A549 (cell line): ENCODE measurements at regions of chr2 and their contacts with region 1.

Region 1: DNA sequence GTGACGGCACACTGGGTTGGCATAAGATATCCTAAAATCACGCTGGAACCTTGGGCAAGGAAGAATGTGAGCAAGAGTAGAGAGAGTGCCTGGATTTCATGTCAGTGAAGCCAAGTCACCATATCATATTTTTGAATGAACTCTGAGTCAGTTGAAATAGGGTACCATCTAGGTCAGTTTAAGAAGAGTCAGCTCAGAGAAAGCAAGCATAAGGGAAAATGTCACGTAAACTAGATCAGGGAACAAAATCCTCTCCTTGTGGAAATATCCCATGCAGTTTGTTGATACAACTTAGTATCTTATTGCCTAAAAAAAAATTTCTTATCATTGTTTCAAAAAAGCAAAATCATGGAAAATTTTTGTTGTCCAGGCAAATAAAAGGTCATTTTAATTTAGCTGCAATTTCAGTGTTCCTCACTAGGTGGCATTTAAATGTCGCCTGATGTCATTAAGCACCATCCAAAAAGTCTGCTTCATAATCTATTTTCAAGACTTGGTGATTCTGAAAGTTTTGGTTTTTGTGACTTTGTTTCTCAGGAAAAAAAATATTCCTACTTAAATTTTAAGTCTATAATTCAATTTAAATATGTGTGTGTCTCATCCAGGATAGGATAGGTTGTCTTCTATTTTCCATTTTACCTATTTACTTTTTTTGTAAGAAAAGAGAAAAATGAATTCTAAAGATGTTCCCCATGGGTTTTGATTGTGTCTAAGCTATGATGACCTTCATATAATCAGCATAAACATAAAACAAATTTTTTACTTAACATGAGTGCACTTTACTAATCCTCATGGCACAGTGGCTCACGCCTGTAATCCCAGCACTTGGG is 19.6 kb downstream of the RSAD2 start:
- DNase-seq: peak in 1 of 2 experiments; percentile 55
- ATAC-seq: peak in 1 of 2 experiments; percentile 68; a peak in 4 of 6 replicates
- H3K4me3 ChIP-seq: no peak overlapping the region
- H3K27ac ChIP-seq: no peak overlapping the region
- H3K4me1 ChIP-seq: no peaks in the 10 kb centered on the region
- CTCF ChIP-seq: peak; percentile 73
- EP300 ChIP-seq: no peak
- POLR2A ChIP-seq: no peak
- RAD21 ChIP-seq: peak; percentile 77 to 78; a peak in 4 of 5 replicates

Region 2: GRCh38 chr2:6909431-6910385 is 12.6 kb after region 1 on chr2:
- CTCF ChIA-PET with region 1: interaction called, 26 read pairs
- POLR2A ChIA-PET with region 1: no interaction called
- DNase-seq: no peak
- ATAC-seq: no peak
- H3K4me3 ChIP-seq: no peak overlapping the region
- H3K27ac ChIP-seq: no peak overlapping the region
- H3K4me1 ChIP-seq: no peaks in the 10 kb centered on the region
- CTCF ChIP-seq: no peak
- EP300 ChIP-seq: no peak
- POLR2A ChIP-seq: no peak
- RAD21 ChIP-seq: no peak

Region 3: DNA sequence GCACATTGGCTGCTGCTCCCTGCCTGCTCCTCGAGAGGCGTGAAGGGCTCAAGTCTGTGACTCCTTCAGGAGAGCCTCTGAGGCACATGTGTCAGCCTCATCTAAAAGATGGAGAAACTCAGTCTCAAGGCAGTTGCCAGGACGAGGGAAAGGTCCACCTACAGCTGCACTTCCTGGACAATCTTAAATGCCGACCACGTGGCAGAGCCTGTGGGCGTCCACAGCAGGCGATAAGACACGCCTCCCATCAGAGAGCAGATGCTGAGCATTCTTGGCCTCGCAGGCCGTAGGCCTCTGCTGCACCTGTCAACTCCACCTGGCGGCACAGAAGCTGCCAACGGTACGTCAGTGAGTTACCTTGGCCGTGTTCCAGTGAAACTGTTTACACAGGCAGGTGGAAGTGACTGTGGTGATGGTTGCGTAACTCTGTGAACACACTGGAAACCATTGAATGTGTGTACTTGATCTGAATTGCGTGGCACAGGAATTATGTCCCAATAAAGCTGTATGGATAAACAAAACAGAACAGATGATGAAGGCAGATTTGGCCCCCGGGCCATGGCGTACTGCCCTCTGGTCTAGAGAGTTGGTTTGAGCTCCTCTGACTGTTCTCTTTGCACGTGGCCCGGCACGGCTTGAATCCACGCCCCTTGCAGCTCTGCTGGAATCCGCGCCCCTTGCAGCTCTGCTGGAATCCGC is 134.6 kb after region 1 on chr2:
- CTCF ChIA-PET with region 1: interaction called, 10 read pairs
- POLR2A ChIA-PET with region 1: no interaction called
- DNase-seq: peak in 1 of 2 experiments; percentile 66
- ATAC-seq: peak; percentile 10 to 55; a peak in 4 of 6 replicates
- H3K4me3 ChIP-seq: no peak overlapping the region
- H3K27ac ChIP-seq: no peak overlapping the region
- H3K4me1 ChIP-seq: 0 out of 3 replicates have a peak, but pooled peaks cover 4% of the 10 kb centered on the region
- CTCF ChIP-seq: no peak
- EP300 ChIP-seq: no peak
- POLR2A ChIP-seq: no peak
- RAD21 ChIP-seq: no peak